Posterior cingulate gyrus (tissue), 11 donors: ENCODE measurements at regions of chr1 and their contacts with region 1.

Region 1: DNA sequence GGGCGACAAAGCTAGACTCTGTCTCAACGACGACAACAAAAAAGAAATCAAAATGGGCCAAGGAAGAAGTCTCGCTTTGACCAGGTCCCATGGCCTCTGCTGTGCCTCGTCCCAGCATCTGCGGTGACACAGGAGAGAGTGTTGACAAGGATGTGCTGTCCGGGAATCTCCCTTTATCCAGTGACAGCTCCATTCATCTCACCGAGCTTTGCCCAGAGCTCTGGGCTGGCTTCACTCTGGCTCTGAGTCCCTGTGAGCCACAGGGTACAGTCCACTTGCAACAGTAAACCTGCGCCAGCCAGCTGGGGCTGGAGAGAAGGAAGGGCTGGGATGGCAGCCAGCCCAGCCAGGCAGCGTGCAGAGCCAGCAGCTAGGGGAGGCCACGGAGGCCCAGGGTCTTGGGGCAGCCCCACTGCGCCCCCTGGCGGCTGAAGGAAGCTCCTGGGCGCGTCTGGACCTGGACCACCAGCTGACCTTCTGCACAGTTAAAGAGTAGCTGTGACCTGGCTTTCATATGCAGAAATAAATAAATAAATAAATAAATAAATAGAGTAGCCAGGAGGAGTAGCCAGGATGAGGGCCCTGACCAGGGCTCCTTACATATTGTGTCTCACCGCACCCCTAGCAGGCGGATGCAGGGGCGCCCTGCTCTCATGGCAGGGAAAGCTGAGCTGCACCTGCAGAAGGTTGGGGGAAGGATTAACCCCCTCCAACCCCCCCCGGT is 29.7 kb downstream of the ENO1 start:
- DNase-seq: peak; percentile 78 to 98 (median 86)

Region 2: DNA sequence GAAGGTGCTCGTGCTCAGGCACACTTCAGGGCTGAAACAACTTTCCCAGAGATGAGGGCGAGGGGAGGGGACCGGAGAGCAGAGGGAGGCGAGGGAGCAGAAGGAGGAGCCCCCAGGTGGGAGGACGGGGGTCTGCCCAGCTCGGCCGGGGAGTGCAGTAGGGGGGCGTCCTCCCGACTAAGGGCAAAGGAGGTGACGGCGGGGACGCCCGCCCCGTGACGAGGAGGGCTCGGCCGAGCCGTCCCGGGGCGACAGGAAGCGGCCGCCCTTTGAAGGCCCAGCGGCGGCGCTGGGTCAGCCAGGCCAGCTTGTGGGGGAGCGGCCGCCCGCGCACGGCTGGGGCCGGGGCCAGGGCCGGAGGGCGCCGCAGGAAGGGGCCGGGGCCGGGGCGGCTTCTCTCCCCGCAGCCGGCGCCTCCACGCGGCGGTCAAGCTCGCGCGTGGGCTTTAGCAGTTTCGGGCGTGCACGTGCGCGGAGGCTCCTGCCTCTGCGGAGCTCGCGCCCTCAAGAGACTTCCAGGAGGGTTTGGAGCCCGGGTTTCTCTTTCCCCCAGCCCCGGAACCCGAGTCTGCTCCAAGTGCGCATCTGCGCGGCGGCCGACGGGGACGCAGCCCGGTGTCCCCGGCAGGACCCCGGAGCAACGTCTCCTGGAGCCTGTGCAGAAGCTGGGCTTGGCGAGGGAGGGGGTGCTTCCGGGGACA is 631.7 kb before region 1 on chr1:
- intact Hi-C with region 1: no loop called
- DNase-seq: peak in 4 of 10 donors; percentile 13 to 72 (median 18)

Region 3: GRCh38 chr1:8560611-8561544 is 287.9 kb before region 1 on chr1:
- intact Hi-C with region 1: loop called (anchors 2 kb)
- DNase-seq: peak in 2 of 10 donors; percentile 19 to 34

Region 4: GRCh38 chr1:8718850-8719361 is 129.9 kb before region 1 on chr1:
- intact Hi-C with region 1: loop called (anchors 1 kb)
- DNase-seq: peak in 2 of 10 donors; percentile 25 to 37

Region 5: GRCh38 chr1:8817406-8818324 is 31.2 kb before region 1 on chr1 and contains the start of gene RERE:
- intact Hi-C with region 1: loop called (anchors 5 kb)
- DNase-seq: peak; percentile 89 to 99 (median 93)